Caco-2 (cell line): ENCODE measurements at regions of chr4 and their contacts with region 1.

Region 1: GRCh38 chr4:51958199-51958968 is 61.8 kb downstream of the LRRC66 start:
- DNase-seq: no peak
- H3K4me3 ChIP-seq: no peak overlapping the region
- H3K4me3 Mint-ChIP-seq: no peak overlapping the region
- H3K27ac Mint-ChIP-seq: no peak overlapping the region
- H3K4me1 ChIP-seq: no peaks in the 10 kb centered on the region
- H3K4me1 Mint-ChIP-seq: no peaks in the 10 kb centered on the region
- H3K27me3 ChIP-seq: no peaks in the 10 kb centered on the region
- H3K27me3 Mint-ChIP-seq: peaks cover 2% of the 10 kb centered on the region
- CTCF ChIP-seq: no peak

Region 2: DNA sequence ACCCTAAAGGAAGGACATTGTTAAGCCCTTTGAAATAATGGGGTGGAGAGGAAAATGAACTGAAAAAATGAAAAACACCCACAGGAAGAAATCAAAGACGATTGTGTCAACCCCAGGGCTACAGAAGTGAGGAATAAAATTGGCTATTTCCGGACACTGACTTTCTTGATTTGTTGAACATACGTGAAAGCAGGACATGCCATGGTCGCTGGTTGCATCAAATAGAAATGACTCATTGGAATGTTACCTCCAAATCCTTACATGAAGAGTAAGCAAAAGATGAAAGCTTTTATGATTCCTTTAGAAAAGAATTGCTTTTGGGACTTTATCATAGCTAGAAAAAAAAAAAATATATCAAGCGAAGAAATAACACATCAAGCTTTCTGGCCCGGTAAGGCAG is 40.1 kb before region 1 on chr4:
- CTCF ChIA-PET with region 1: no interaction called
- POLR2A ChIA-PET with region 1: no interaction called
- intact Hi-C with region 1: no loop called
- DNase-seq: no peak
- H3K4me3 ChIP-seq: no peak overlapping the region
- H3K4me3 Mint-ChIP-seq: no peak overlapping the region
- H3K27ac Mint-ChIP-seq: no peak overlapping the region
- H3K4me1 ChIP-seq: no peaks in the 10 kb centered on the region
- H3K4me1 Mint-ChIP-seq: no peaks in the 10 kb centered on the region
- H3K27me3 ChIP-seq: no peaks in the 10 kb centered on the region
- H3K27me3 Mint-ChIP-seq: no peaks in the 10 kb centered on the region
- CTCF ChIP-seq: no peak

Region 3: DNA sequence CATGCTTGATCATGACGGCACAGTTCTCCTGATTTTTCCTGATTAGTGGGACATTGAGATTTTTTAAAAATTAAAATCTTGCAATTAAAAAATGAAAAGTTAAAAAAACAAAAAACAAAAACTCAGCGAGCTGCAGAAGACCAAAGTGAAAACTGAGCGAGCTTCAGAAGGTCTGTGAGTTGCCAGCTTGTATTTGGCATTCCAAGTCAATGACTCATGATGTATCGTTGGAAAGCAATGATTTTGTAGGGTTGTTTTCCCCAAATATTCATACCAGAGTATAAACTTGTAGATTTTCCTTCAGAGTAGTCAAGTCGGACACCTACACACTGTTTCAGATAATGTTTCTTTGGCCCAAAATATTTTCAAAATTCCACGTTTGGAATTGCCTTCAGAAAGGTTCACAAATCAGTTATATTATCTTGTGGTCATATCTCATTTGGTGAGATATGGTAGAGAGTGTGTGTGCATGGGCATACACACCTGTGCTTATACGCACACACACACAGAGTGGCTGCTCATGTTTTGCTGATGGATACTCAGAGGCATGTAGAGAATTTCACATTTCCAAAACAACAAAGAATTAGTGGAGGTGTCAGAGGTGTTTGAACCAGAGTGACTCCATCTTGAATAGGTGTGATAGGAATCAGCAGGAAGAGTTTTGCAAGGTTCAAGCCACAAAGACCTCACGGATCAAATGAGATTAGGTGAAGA is 15.0 kb before region 1 on chr4:
- CTCF ChIA-PET with region 1: no interaction called
- POLR2A ChIA-PET with region 1: no interaction called
- intact Hi-C with region 1: no loop called
- DNase-seq: no peak
- H3K4me3 ChIP-seq: no peak overlapping the region
- H3K4me3 Mint-ChIP-seq: no peak overlapping the region
- H3K27ac Mint-ChIP-seq: no peak overlapping the region
- H3K4me1 ChIP-seq: 0 out of 2 replicates have a peak, but pooled peaks cover 3% of the 10 kb centered on the region
- H3K4me1 Mint-ChIP-seq: peaks cover 7% of the 10 kb centered on the region
- H3K27me3 ChIP-seq: no peaks in the 10 kb centered on the region
- H3K27me3 Mint-ChIP-seq: no peaks in the 10 kb centered on the region
- CTCF ChIP-seq: no peak

Region 4: DNA sequence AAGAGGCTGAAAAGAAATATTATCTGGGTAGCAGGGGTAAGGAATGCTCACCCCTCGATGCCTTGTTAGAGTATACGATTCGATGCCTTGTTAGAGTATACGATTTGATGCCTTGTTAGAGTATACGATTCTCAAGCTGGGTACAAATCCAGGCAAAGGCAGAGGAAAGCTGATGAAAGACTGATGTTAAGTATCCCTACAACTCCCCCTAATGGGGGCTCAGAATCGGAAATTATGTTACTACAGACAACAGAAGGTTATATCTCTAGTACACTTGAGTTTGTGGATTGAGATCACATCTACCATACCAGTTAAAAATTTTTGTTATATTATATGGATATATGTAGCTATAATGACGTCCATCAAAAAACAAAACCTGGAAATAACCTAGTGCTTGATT is 57.0 kb after region 1 on chr4:
- CTCF ChIA-PET with region 1: no interaction called
- POLR2A ChIA-PET with region 1: no interaction called
- intact Hi-C with region 1: loop called (anchors 10 kb)
- DNase-seq: peak in 1 of 2 experiments; percentile 32
- H3K4me3 ChIP-seq: no peak overlapping the region
- H3K4me3 Mint-ChIP-seq: no peak overlapping the region
- H3K27ac Mint-ChIP-seq: no peak overlapping the region
- H3K4me1 ChIP-seq: peaks cover 3% of the 10 kb centered on the region; the same call in 1 of the 2 replicates
- H3K4me1 Mint-ChIP-seq: no peaks in the 10 kb centered on the region
- H3K27me3 ChIP-seq: no peaks in the 10 kb centered on the region
- H3K27me3 Mint-ChIP-seq: no peaks in the 10 kb centered on the region
- CTCF ChIP-seq: peak; percentile 28 to 31